ENCODE measurements at regions of chr12 and their contacts with region 1.

Region 1: GRCh38 chr12:39816731-39817130 is 197.1 kb upstream of the ABCD2 start:
- DNase-seq: no peak
- H3K4me3 ChIP-seq: no peak overlapping the region
- H3K4me3 Mint-ChIP-seq: no peak overlapping the region
- H3K27ac Mint-ChIP-seq: peak overlapping the region; percentile 10
- H3K4me1 ChIP-seq: peaks cover 32% of the 10 kb centered on the region
- H3K4me1 Mint-ChIP-seq: peaks cover 7% of the 10 kb centered on the region
- H3K27me3 ChIP-seq: no peaks in the 10 kb centered on the region
- H3K27me3 Mint-ChIP-seq: no peaks in the 10 kb centered on the region
- CTCF ChIP-seq: no peak

Region 2: GRCh38 chr12:39464976-39465695 is 351.6 kb before region 1 on chr12:
- CTCF ChIA-PET with region 1: no interaction called
- POLR2A ChIA-PET with region 1: no interaction called
- intact Hi-C with region 1: no loop called
- DNase-seq: no peak
- H3K4me3 ChIP-seq: no peak overlapping the region
- H3K4me3 Mint-ChIP-seq: no peak overlapping the region
- H3K27ac Mint-ChIP-seq: no peak overlapping the region
- H3K4me1 ChIP-seq: no peaks in the 10 kb centered on the region
- H3K4me1 Mint-ChIP-seq: no peaks in the 10 kb centered on the region
- H3K27me3 ChIP-seq: no peaks in the 10 kb centered on the region
- H3K27me3 Mint-ChIP-seq: peaks cover 3% of the 10 kb centered on the region
- CTCF ChIP-seq: no peak

Region 3: GRCh38 chr12:39712334-39712733 is 104.4 kb before region 1 on chr12:
- CTCF ChIA-PET with region 1: no interaction called
- POLR2A ChIA-PET with region 1: no interaction called
- intact Hi-C with region 1: no loop called
- DNase-seq: no peak
- H3K4me3 ChIP-seq: no peak overlapping the region
- H3K4me3 Mint-ChIP-seq: no peak overlapping the region
- H3K27ac Mint-ChIP-seq: no peak overlapping the region
- H3K4me1 ChIP-seq: no peaks in the 10 kb centered on the region
- H3K4me1 Mint-ChIP-seq: no peaks in the 10 kb centered on the region
- H3K27me3 ChIP-seq: no peaks in the 10 kb centered on the region
- H3K27me3 Mint-ChIP-seq: no peaks in the 10 kb centered on the region
- CTCF ChIP-seq: no peak

Region 4: DNA sequence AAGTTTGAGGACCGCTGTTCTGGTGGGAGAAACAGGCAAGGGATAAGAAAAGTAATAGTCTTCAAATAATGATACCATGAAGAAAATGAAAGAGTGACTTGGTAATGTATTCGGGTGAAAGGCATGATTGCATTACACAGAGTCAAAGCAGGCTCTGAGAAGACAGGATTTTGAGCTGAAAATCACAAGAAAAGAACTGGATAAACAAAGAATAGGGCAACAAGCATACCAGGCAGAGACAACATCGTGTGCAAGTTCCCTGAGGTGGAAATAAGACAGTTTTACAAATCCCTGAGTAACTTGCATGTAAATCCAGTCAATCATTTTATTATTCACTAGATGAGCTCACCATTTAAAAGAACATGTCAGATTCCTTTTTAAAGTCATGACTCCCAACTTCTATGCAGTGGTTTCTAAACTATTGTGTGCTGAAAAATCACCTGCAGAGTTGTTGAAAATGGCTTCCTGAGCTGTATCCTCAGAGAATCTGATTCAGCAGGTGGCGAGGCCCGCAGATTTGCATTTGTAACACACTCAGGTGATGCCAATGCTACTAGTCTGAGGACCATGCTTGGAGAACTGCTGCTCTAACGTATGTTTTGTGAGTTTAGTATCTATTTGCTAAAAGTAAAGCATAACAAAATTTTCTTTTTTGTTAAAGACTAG is 64.1 kb before region 1 on chr12:
- CTCF ChIA-PET with region 1: no interaction called
- POLR2A ChIA-PET with region 1: no interaction called
- intact Hi-C with region 1: no loop called
- DNase-seq: no peak
- H3K4me3 ChIP-seq: no peak overlapping the region
- H3K4me3 Mint-ChIP-seq: no peak overlapping the region
- H3K27ac Mint-ChIP-seq: no peak overlapping the region
- H3K4me1 ChIP-seq: no peaks in the 10 kb centered on the region
- H3K4me1 Mint-ChIP-seq: no peaks in the 10 kb centered on the region
- H3K27me3 ChIP-seq: no peaks in the 10 kb centered on the region
- H3K27me3 Mint-ChIP-seq: no peaks in the 10 kb centered on the region
- CTCF ChIP-seq: no peak

Region 5: DNA sequence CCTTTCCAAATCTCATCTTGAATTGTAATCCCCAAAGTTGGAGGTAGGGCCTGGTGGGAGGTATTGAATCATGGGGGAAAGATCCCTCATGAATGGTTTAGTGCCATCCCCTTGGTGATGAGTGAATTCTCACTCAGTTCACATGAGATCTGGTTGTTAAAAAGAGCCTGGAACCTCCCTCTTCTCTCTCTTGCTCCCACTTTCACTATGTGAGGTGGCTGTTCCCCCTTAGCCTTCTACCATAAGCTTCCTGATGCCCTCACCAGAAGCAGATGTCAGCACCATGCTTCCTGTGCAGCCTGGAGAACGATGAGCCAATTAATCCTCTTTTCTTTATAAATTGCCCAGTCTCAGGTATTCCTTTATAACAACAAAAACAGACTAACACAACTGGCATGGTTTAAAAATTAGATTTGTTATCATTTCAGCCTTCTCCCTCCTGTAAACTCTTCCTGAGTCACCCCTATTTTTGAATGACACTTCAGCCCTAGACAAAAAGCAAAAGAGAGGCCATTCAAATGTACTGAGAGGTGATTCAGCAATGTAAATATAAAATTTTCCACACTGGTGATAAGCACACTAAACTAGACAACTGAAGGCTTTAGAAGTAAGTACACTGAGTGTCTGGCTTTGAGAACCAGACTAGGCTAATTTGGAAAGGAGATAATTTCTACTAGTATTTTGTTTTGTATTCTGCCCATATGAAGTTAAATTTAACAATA is 15.0 kb after region 1 on chr12:
- CTCF ChIA-PET with region 1: no interaction called
- POLR2A ChIA-PET with region 1: no interaction called
- intact Hi-C with region 1: loop called (anchors 2 kb)
- DNase-seq: peak in 1 of 2 experiments; percentile 18
- H3K4me3 ChIP-seq: no peak overlapping the region
- H3K4me3 Mint-ChIP-seq: no peak overlapping the region
- H3K27ac Mint-ChIP-seq: no peak overlapping the region
- H3K4me1 ChIP-seq: peaks cover 14% of the 10 kb centered on the region
- H3K4me1 Mint-ChIP-seq: no peaks in the 10 kb centered on the region
- H3K27me3 ChIP-seq: no peaks in the 10 kb centered on the region
- H3K27me3 Mint-ChIP-seq: no peaks in the 10 kb centered on the region
- CTCF ChIP-seq: no peak

Region 6: GRCh38 chr12:39846971-39847650 is 30.4 kb after region 1 on chr12:
- CTCF ChIA-PET with region 1: no interaction called
- POLR2A ChIA-PET with region 1: no interaction called
- intact Hi-C with region 1: no loop called
- DNase-seq: no peak
- H3K4me3 ChIP-seq: no peak overlapping the region
- H3K4me3 Mint-ChIP-seq: no peak overlapping the region
- H3K27ac Mint-ChIP-seq: peak overlapping the region; percentile 66
- H3K4me1 ChIP-seq: no peaks in the 10 kb centered on the region; the same call in 1 of the 2 replicates
- H3K4me1 Mint-ChIP-seq: peaks cover 7% of the 10 kb centered on the region
- H3K27me3 ChIP-seq: no peaks in the 10 kb centered on the region
- H3K27me3 Mint-ChIP-seq: no peaks in the 10 kb centered on the region
- CTCF ChIP-seq: no peak